ENCODE measurements at regions of chr7 and their contacts with region 1.

Region 1: DNA sequence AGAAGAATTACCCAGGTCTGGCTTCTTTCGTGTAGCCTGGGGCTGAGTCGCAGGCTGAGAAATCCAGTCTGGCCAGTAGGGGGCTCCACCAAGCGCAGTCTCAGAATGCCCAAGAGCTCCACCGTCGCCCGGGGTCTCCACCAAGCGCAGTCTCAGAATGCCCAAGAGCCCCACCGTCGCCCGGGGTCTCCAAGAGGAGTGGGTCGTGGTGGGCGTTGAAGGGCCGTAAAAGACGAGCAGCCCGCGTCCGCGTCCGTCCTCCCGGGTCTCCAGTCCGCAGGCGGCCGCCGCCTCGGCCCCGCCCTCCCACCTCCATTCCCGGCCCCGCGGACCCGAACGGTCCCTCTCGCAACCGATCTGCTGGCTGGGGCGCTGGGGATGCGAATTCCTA is 895 bp upstream of the ZYX start:
- DNase-seq: peak; percentile 89
- ATAC-seq: peak; percentile 49
- H3K4me3 Mint-ChIP-seq: peak overlapping the region; percentile 76
- H3K27ac Mint-ChIP-seq: no peak overlapping the region
- H3K4me1 Mint-ChIP-seq: peaks cover 34% of the 10 kb centered on the region
- H3K27me3 Mint-ChIP-seq: no peaks in the 10 kb centered on the region
- CTCF ChIP-seq: peak; percentile 97

Region 2: DNA sequence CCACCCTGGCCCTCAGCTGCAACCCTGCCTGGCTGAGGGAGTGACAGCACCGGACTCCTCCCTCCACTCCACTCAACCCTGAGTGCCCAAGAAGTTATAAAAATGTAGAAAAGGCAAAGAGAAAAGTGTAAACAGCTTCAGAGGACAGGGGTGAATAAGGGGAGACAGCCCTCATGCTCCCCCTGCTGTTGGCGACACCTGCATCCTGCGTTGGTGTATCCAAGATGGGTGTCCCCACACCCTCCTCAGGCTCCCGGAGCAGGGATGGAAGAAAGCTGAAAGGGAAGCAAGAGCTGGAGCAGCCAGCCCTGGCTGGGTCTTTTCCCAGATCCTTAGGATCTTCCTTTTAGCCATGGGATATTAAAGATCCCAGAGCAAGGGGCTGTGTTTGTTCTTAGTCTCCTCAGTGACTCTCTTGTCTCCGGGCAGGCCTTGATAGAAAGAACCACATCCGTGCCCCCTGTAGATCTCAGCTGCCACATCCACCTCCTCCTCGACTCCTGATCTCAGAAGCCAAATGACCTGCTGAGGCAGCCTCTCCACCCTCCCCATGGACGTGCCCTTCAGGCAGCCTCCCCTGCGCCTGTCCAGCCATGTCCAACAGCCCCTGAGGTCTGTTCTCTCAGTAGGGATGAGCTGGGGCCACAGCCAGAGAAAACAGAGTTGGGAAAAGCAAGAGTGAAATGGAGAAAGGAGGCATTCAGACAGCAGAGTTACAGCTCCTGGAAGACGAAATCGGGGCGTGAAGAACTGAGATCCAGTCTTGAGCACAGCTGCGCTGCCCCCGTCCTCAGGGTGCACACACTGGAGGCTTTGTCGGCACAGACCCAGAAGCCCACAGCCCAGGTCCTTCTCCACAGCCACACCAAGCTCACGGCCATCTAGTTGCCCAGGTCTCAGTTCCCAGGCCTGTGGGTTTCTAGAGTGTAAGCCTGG is 24.5 kb before region 1 on chr7:
- CTCF ChIA-PET with region 1: interaction called, 16 read pairs
- POLR2A ChIA-PET with region 1: interaction called, 3 read pairs
- DNase-seq: peak; percentile 38
- ATAC-seq: peak; percentile 65
- H3K4me3 Mint-ChIP-seq: no peak overlapping the region
- H3K27ac Mint-ChIP-seq: no peak overlapping the region; the same call in 1 of the 2 replicates
- H3K4me1 Mint-ChIP-seq: peaks cover 26% of the 10 kb centered on the region
- H3K27me3 Mint-ChIP-seq: peaks cover 4% of the 10 kb centered on the region; the same call in 1 of the 2 replicates
- CTCF ChIP-seq: no peak

Region 3: GRCh38 chr7:143361552-143362130 is 18.6 kb before region 1 on chr7:
- CTCF ChIA-PET with region 1: interaction called, 16 read pairs
- POLR2A ChIA-PET with region 1: interaction called, 3 read pairs
- DNase-seq: peak; percentile 47
- ATAC-seq: peak; percentile 43
- H3K4me3 Mint-ChIP-seq: peak overlapping the region; percentile 92
- H3K27ac Mint-ChIP-seq: no peak overlapping the region
- H3K4me1 Mint-ChIP-seq: peaks cover 19% of the 10 kb centered on the region
- H3K27me3 Mint-ChIP-seq: peaks cover 34% of the 10 kb centered on the region
- CTCF ChIP-seq: no peak

Region 4: DNA sequence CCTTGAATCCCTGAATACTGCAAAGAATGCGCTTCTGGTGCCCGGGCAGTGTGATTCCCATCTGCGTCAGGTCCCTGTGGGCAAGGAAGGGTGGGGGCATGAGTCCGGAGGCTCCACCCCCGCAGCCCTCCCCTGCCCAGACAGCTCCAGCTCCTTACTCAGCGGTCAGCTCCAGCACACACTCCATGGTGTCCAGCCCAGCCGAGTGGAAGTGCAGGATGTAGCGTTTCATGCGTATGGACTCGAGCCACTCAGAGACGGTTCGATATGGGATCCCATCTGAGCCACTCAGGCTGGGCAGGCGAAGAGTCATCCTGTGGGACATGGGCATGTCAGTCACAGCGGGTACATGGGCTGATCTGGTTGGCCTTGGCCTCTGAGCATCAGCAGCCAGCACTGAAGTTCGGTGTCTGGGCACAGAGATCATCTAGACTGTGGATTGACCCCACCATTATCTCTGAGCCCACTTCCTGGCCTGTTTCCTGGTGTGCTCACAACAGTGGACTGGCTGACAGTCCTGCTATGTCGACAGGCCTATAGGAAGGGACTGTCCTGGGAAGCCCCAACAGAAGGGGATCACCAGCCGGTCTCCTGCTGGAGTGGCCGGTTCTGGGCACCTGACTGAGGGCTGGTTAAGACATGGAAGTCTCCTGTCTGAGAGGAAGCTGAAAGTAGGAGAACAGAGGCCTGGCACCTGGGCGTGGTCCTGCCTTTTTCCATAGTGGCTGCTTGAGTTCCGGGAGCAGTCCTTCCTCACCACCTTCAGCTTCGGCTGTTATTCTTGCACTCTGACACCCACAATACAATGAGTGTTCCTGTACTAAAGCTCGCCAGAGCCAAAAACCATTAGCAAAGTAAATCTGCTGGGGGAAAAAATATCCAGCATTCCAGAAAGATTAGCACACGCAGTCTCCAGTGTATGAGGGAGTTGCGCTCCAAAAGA is 11.5 kb after region 1 on chr7:
- CTCF ChIA-PET with region 1: interaction called, 23 read pairs
- POLR2A ChIA-PET with region 1: interaction called, 10 read pairs
- DNase-seq: no peak
- ATAC-seq: no peak
- H3K4me3 Mint-ChIP-seq: no peak overlapping the region
- H3K27ac Mint-ChIP-seq: peak overlapping the region; percentile 57; the same call in 1 of the 2 replicates
- H3K4me1 Mint-ChIP-seq: peaks cover 9% of the 10 kb centered on the region
- H3K27me3 Mint-ChIP-seq: no peaks in the 10 kb centered on the region
- CTCF ChIP-seq: no peak

Region 5: DNA sequence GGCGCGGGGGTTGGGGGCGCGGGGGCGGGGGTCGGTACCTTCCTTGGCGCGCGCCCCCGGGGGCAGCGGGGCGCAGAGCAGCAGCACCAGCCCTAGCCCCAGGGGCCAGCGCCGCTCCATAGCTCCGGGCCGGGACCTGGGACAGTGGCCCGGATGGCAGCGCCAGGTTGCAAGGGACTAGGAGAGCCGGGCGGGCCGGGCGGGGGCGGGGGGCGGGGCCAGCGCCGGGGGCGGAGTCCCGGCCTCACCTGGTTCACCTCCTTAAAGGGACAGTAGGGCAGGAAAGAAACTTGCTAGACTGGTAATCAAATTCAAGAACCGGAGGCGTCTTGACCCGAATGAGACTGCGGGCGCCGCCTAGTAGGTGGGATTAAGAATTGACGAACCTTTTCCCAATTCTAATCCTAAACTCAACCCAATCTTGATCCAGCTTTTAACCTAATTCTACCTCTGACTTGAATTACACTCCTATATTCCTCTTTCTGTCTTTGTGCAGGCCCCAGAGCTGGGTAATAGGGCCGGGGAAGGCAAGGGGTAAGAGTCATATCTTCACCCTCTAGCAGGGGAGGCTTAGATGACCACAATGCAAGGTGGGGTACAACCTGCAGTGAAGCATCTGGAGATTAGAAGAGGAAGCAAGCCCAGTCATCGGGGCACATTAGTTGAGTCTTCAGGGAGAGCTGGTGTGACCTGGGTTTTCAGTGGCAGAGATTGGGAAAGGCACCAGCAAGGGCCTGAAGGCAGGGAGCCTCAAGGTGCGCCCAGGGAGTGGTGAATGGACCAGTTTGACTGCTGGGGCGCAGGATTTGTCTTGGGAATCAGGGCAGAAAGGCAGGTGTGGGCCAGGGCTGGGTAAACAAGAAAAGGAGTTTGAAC is 28.7 kb after region 1 on chr7 and contains the start of gene EPHA1:
- CTCF ChIA-PET with region 1: interaction called, 41 read pairs
- POLR2A ChIA-PET with region 1: interaction called, 5 read pairs
- DNase-seq: peak; percentile 82
- ATAC-seq: peak; percentile 68
- H3K4me3 Mint-ChIP-seq: peak within 1 kb of the TSS; percentile 91
- H3K27ac Mint-ChIP-seq: peak within 1 kb of the TSS; percentile 99
- H3K4me1 Mint-ChIP-seq: peaks cover 82% of the 10 kb centered on the region
- H3K27me3 Mint-ChIP-seq: no peaks in the 10 kb centered on the region
- CTCF ChIP-seq: peak; percentile 49
- total RNA-seq, gene EPHA1: 159 to 203 TPM (median 162 TPM) in 3 replicates

Region 6: GRCh38 chr7:143429770-143430698 is 49.8 kb after region 1 on chr7:
- CTCF ChIA-PET with region 1: no interaction called
- POLR2A ChIA-PET with region 1: no interaction called
- DNase-seq: no peak
- ATAC-seq: no peak
- H3K4me3 Mint-ChIP-seq: no peak overlapping the region
- H3K27ac Mint-ChIP-seq: no peak overlapping the region
- H3K4me1 Mint-ChIP-seq: no peaks in the 10 kb centered on the region
- H3K27me3 Mint-ChIP-seq: no peaks in the 10 kb centered on the region
- CTCF ChIP-seq: no peak